Activated CD4-positive, alpha-beta memory T cell treated with anti-CD3 and anti-CD28 coated beads for 36 hours (primary cell): ENCODE measurements at regions of chr1 and their contacts with region 1.

Region 1: GRCh38 chr1:48202030-48202752 is 20.3 kb upstream of the SLC5A9 start:
- DNase-seq: peak; percentile 70
- H3K4me3 Mint-ChIP-seq: no peak overlapping the region
- H3K27ac Mint-ChIP-seq: no peak overlapping the region
- H3K4me1 Mint-ChIP-seq: peaks cover 3% of the 10 kb centered on the region
- H3K27me3 Mint-ChIP-seq: peaks cover 9% of the 10 kb centered on the region

Region 2: GRCh38 chr1:47997289-47998200 is 204.6 kb before region 1 on chr1 and contains the start of gene TRABD2B:
- CTCF ChIA-PET with region 1: no interaction called
- POLR2A ChIA-PET with region 1: no interaction called
- intact Hi-C with region 1: loop called (anchors 2 kb)
- DNase-seq: peak; percentile 72
- H3K4me3 Mint-ChIP-seq: peak within 1 kb of the TSS; percentile 63
- H3K27ac Mint-ChIP-seq: no peak within 1 kb of the TSS
- H3K4me1 Mint-ChIP-seq: peaks cover 8% of the 10 kb centered on the region
- H3K27me3 Mint-ChIP-seq: peaks cover 47% of the 10 kb centered on the region
- total RNA-seq, gene TRABD2B: not detected

Region 3: DNA sequence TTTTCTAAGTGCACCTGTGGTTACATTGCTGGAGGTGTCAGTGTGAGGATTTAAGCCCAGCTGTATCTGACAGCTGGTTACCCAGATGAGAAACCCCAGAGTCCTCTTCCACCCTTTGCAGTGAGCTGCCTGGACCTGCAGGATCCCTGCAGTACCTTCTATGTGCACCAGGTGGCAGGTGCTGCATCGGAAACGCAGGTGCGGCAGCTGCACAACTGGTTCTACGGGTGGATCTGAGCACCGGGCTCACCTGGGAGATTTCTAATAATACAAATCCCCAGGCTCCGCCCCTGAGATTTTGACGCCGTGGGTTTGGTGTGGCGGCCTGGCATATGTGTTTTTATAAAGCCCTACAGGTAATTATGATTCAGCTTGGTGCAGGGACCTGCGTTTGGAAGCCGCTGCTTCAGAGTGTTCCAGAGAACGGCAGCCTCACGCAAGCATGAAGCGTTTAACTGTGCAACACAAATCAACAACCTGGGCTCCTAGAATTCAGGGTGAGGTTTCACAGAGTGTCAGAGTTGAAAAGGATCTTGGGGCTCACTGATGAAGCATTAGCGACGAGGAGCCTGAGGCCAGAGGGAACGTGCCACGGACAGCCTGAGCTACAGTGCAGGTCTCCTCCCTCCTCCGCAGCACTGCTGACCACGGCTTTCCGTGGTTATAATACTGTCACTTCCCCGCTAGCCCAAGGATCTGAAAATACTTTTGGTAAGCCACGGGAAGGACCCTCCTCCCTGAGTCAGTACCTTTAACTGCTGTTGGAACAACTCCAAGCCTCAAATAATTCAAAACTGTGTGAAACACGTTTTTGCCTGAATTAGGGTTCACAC is 108.3 kb before region 1 on chr1:
- CTCF ChIA-PET with region 1: interaction called, 15 read pairs
- POLR2A ChIA-PET with region 1: no interaction called
- intact Hi-C with region 1: loop called (anchors 1 kb)
- DNase-seq: peak; percentile 82
- H3K4me3 Mint-ChIP-seq: peak overlapping the region; percentile 40
- H3K27ac Mint-ChIP-seq: no peak overlapping the region
- H3K4me1 Mint-ChIP-seq: peaks cover 7% of the 10 kb centered on the region
- H3K27me3 Mint-ChIP-seq: peaks cover 44% of the 10 kb centered on the region

Region 4: DNA sequence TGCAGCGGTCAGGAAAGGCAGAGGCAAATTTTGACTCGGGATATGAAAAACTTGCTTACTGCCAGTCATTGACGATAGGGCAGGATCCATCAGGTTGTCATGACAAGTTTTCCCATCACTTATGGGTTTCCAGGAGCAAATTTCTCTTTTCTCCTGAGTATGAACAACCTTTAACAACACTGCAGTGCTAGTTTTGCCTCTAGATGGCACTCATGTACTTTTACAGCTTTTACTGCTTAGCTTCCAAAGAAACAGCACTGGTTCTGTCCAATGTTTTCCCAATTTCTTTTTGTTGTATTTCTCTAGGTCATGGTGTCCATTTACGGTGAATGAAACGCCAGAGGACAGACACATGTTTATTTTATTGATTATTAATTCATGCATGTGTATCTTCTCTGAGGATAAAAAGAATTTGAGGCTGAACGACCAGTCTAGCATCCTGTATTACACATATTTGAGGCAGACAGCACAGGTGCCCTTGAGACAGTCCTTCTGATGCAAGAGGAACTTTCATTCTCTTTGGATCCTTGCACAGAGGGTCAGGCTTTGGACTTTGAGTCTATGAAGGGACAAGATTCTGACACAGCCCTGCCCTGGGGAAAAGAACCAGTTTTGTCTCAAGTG is 92.7 kb before region 1 on chr1:
- CTCF ChIA-PET with region 1: interaction called, 42 read pairs
- POLR2A ChIA-PET with region 1: no interaction called
- intact Hi-C with region 1: loop called (anchors 1 kb)
- DNase-seq: no peak
- H3K4me3 Mint-ChIP-seq: no peak overlapping the region
- H3K27ac Mint-ChIP-seq: no peak overlapping the region
- H3K4me1 Mint-ChIP-seq: peaks cover 3% of the 10 kb centered on the region
- H3K27me3 Mint-ChIP-seq: peaks cover 12% of the 10 kb centered on the region

Region 5: DNA sequence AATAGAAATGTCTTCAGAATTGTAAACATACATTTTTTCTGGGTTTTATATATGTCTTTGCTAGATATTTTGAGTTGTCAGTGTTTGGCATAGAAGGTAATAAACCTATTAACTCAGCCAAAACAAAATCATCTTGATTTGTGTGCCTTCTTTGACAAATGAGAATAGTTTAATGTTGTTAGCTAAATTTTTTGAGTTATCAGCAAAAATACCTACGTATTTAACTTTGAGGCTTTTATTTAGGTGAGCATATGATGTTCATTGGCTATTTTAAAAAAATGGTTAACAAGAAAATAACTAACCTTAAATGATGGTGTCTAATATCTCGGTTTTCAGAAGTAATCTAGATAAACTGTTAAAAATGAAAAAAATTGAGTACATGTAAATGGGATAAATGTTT is 62.9 kb before region 1 on chr1:
- CTCF ChIA-PET with region 1: no interaction called
- POLR2A ChIA-PET with region 1: no interaction called
- intact Hi-C with region 1: no loop called
- DNase-seq: no peak
- H3K4me3 Mint-ChIP-seq: no peak overlapping the region
- H3K27ac Mint-ChIP-seq: no peak overlapping the region
- H3K4me1 Mint-ChIP-seq: no peaks in the 10 kb centered on the region
- H3K27me3 Mint-ChIP-seq: peaks cover 18% of the 10 kb centered on the region

Region 6: GRCh38 chr1:48236716-48237470 is 34.7 kb after region 1 on chr1:
- CTCF ChIA-PET with region 1: no interaction called
- POLR2A ChIA-PET with region 1: no interaction called
- intact Hi-C with region 1: loop called (anchors 2 kb)
- DNase-seq: no peak
- H3K4me3 Mint-ChIP-seq: no peak overlapping the region
- H3K27ac Mint-ChIP-seq: no peak overlapping the region
- H3K4me1 Mint-ChIP-seq: no peaks in the 10 kb centered on the region
- H3K27me3 Mint-ChIP-seq: no peaks in the 10 kb centered on the region

Region 7: GRCh38 chr1:48498096-48498791 is 296.1 kb after region 1 on chr1:
- CTCF ChIA-PET with region 1: interaction called, 5 read pairs
- POLR2A ChIA-PET with region 1: no interaction called
- intact Hi-C with region 1: loop called (anchors 1 kb)
- DNase-seq: peak; percentile 77
- H3K4me3 Mint-ChIP-seq: no peak overlapping the region
- H3K27ac Mint-ChIP-seq: no peak overlapping the region
- H3K4me1 Mint-ChIP-seq: peaks cover 4% of the 10 kb centered on the region
- H3K27me3 Mint-ChIP-seq: no peaks in the 10 kb centered on the region